CD8-positive, alpha-beta T cell (primary cell): ENCODE measurements at regions of chr5 and their contacts with region 1.

Region 1: DNA sequence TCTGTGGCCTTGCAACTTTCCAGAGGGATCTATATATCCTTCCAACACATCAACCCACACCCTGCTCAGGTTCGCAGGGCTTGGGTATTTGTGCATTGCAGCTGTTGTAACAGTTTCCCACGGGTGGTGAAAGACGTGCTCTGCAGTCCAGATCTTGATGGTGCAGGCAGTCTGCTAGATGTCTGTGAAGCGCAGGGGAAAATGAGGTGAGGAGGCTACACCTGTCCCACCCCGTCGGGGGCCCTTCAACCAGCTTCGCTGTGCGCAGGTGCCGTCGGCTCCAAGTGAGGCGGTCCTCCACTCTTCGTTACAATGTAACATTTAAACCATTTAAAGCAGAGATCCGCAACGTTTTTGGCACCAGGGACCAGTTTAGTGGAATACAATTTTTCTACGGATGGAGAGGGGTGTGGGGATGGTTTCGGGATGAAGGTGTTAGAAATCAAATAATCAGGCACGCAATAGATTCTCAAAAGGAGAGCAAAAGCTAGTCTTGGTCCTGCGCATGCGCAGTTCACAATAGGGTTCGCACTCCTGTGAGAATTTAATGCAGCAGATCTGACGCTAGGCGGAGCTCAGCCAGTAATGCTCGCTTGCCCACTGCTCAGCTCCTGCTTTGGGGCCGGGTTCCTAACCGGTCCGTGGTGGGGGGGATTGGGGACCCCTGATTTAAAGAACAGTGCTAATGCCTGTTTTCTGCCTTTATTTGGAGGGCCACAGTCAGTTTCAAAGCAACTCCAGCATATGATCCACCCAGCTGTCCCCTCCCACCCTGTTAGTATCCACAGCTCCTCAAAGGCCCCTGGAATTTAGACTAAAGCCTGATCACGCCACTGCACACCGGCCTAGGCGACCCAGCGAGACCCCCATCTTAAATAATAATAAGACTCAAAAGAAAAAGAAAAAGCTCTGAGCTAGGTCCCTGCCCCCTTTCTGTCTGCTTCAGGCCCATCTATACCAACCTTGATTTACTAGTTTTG is 97.1 kb upstream of the SELENOP start:
- DNase-seq: peak; percentile 78 to 96 (median 90)
- ATAC-seq: peak; percentile 91
- H3K4me3 ChIP-seq: peak overlapping the region; percentile 65 to 71
- H3K4me3 Mint-ChIP-seq: peak overlapping the region; percentile 93
- H3K27ac ChIP-seq: peak overlapping the region; percentile 57 to 60
- H3K27ac Mint-ChIP-seq: peak overlapping the region; percentile 95
- H3K4me1 ChIP-seq: peaks cover 9% of the 10 kb centered on the region
- H3K4me1 Mint-ChIP-seq: peaks cover 14% of the 10 kb centered on the region
- H3K27me3 ChIP-seq: no peaks in the 10 kb centered on the region
- H3K27me3 Mint-ChIP-seq: peaks cover 2% of the 10 kb centered on the region
- CTCF ChIP-seq: peak; percentile 86

Region 2: GRCh38 chr5:41924872-41925554 is 983.8 kb before region 1 on chr5 and contains the start of gene FBXO4:
- CTCF ChIA-PET with region 1: no interaction called
- POLR2A ChIA-PET with region 1: no interaction called
- intact Hi-C with region 1: no loop called
- DNase-seq: peak; percentile 79 to 96 (median 88)
- ATAC-seq: peak; percentile 96
- H3K4me3 ChIP-seq: peak within 1 kb of the TSS; percentile 79 to 87
- H3K4me3 Mint-ChIP-seq: peak within 1 kb of the TSS; percentile 87
- H3K27ac ChIP-seq: peak within 1 kb of the TSS; percentile 91 to 98
- H3K27ac Mint-ChIP-seq: peak within 1 kb of the TSS; percentile 99
- H3K4me1 ChIP-seq: peaks cover 16% of the 10 kb centered on the region
- H3K4me1 Mint-ChIP-seq: peaks cover 28% of the 10 kb centered on the region
- H3K27me3 ChIP-seq: no peaks in the 10 kb centered on the region
- H3K27me3 Mint-ChIP-seq: no peaks in the 10 kb centered on the region
- CTCF ChIP-seq: peak; percentile 57
- total RNA-seq, gene FBXO4: 4.4 to 4.7 TPM

Region 3: DNA sequence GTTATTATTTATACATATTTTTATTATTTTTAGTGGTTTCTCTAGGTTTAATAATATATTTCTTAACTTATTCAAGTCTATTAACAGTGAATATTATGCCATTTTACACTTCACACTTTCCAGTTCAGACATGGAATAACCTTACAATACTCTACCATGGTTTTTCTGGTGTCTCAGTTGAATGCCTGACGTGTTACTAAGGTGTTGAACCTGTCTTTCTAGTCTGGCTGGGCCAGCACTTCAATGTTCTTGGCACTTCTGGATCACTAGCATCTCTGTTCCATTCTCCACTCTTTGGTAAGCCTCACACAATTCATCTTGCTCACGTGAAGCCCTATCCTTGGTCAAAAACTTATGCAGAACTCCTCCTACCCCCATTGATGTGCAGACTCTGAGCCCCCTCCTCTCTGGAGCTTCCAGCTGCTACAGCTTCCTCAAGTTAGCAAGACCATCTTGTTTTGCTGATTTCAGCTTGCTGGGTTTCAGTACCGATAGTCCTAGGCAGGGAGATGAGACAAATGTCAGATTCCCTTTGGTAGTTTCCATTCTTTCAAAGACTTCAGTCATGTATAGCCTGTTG is 740.6 kb before region 1 on chr5:
- CTCF ChIA-PET with region 1: no interaction called
- POLR2A ChIA-PET with region 1: no interaction called
- intact Hi-C with region 1: no loop called
- DNase-seq: no peak
- ATAC-seq: no peak
- H3K4me3 ChIP-seq: no peak overlapping the region
- H3K4me3 Mint-ChIP-seq: no peak overlapping the region
- H3K27ac ChIP-seq: no peak overlapping the region
- H3K27ac Mint-ChIP-seq: no peak overlapping the region
- H3K4me1 ChIP-seq: no peaks in the 10 kb centered on the region
- H3K4me1 Mint-ChIP-seq: no peaks in the 10 kb centered on the region
- H3K27me3 ChIP-seq: no peaks in the 10 kb centered on the region
- H3K27me3 Mint-ChIP-seq: no peaks in the 10 kb centered on the region
- CTCF ChIP-seq: no peak

Region 4: GRCh38 chr5:42235837-42236236 is 673.0 kb before region 1 on chr5:
- CTCF ChIA-PET with region 1: no interaction called
- POLR2A ChIA-PET with region 1: no interaction called
- intact Hi-C with region 1: no loop called
- DNase-seq: no peak
- ATAC-seq: no peak
- H3K4me3 ChIP-seq: no peak overlapping the region
- H3K4me3 Mint-ChIP-seq: no peak overlapping the region
- H3K27ac ChIP-seq: no peak overlapping the region
- H3K27ac Mint-ChIP-seq: no peak overlapping the region
- H3K4me1 ChIP-seq: no peaks in the 10 kb centered on the region
- H3K4me1 Mint-ChIP-seq: no peaks in the 10 kb centered on the region
- H3K27me3 ChIP-seq: no peaks in the 10 kb centered on the region
- H3K27me3 Mint-ChIP-seq: peaks cover 2% of the 10 kb centered on the region
- CTCF ChIP-seq: no peak

Region 5: GRCh38 chr5:42950440-42951292 is 41.9 kb after region 1 on chr5:
- CTCF ChIA-PET with region 1: interaction called, 58 read pairs
- POLR2A ChIA-PET with region 1: interaction called, 33 read pairs
- intact Hi-C with region 1: loop called (anchors 1 to 2 kb)
- DNase-seq: peak; percentile 26 to 90 (median 72)
- ATAC-seq: peak; percentile 43
- H3K4me3 ChIP-seq: peak overlapping the region; percentile 72 to 83
- H3K4me3 Mint-ChIP-seq: peak overlapping the region; percentile 94
- H3K27ac ChIP-seq: peak overlapping the region; percentile 93 to 94
- H3K27ac Mint-ChIP-seq: peak overlapping the region; percentile 99
- H3K4me1 ChIP-seq: peaks cover 20% of the 10 kb centered on the region
- H3K4me1 Mint-ChIP-seq: peaks cover 34% of the 10 kb centered on the region
- H3K27me3 ChIP-seq: no peaks in the 10 kb centered on the region
- H3K27me3 Mint-ChIP-seq: no peaks in the 10 kb centered on the region
- CTCF ChIP-seq: no peak

Region 6: GRCh38 chr5:43008369-43009153 is 99.8 kb after region 1 on chr5:
- CTCF ChIA-PET with region 1: interaction called, 8 read pairs
- POLR2A ChIA-PET with region 1: interaction called, 26 read pairs
- intact Hi-C with region 1: no loop called
- DNase-seq: peak; percentile 86 to 97 (median 93)
- ATAC-seq: peak; percentile 63
- H3K4me3 ChIP-seq: peak overlapping the region; percentile 70 to 81
- H3K4me3 Mint-ChIP-seq: peak overlapping the region; percentile 98
- H3K27ac ChIP-seq: peak overlapping the region; percentile 94 to 96
- H3K27ac Mint-ChIP-seq: peak overlapping the region; percentile 96
- H3K4me1 ChIP-seq: peaks cover 25% of the 10 kb centered on the region
- H3K4me1 Mint-ChIP-seq: peaks cover 34% of the 10 kb centered on the region
- H3K27me3 ChIP-seq: no peaks in the 10 kb centered on the region
- H3K27me3 Mint-ChIP-seq: no peaks in the 10 kb centered on the region
- CTCF ChIP-seq: no peak

Region 7: DNA sequence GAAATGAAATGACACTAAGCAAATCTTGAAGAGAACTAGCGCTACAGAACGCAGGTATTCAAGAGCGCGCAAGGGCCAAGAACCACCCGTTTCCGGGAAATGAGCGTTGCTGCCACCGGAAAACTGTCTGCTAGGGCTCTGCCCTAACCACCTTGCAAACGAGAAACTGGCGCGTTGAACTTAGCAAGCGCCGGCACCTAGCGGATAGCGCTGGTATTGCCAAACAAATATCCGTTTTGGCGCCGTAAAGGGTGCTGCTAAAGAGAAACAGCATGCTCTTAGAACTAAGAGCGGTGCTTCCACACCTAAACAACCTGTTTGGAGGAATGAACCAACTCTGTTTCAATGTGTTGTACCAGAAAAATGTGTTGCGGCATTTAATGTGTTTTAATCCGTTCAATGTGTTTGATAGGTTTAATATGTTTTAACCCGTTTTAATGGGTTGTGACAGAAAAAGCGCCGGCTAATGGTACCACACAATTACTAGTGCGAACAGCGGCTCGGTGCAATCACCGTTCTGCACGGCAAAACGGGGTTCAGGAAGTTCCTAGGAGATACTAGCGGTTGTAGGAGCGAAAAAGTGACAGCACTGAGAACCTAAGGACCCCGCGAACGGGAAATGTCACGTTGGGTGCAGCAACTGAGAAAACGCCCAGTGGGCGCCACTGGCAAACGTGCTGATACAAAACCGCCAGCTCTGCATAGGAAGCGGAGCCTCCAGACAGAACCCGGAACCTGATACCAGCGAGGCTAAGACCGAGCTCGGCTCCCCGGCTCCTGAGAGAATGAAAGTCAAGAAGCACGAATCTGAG is 131.7 kb after region 1 on chr5 and contains the start of gene ANXA2R:
- CTCF ChIA-PET with region 1: interaction called, 25 read pairs
- POLR2A ChIA-PET with region 1: interaction called, 69 read pairs
- intact Hi-C with region 1: loop called (anchors 1 to 2 kb)
- DNase-seq: peak; percentile 88 to 98 (median 93)
- ATAC-seq: peak; percentile 58
- H3K4me3 ChIP-seq: peak within 1 kb of the TSS; percentile 86 to 87
- H3K4me3 Mint-ChIP-seq: peak within 1 kb of the TSS; percentile 93
- H3K27ac ChIP-seq: peak within 1 kb of the TSS; percentile 93 to 94
- H3K27ac Mint-ChIP-seq: peak within 1 kb of the TSS; percentile 98
- H3K4me1 ChIP-seq: peaks cover 27% of the 10 kb centered on the region
- H3K4me1 Mint-ChIP-seq: peaks cover 56% of the 10 kb centered on the region
- H3K27me3 ChIP-seq: no peaks in the 10 kb centered on the region
- H3K27me3 Mint-ChIP-seq: no peaks in the 10 kb centered on the region
- CTCF ChIP-seq: peak; percentile 79
- total RNA-seq, gene ANXA2R: 38.2 to 39.5 TPM

Region 8: DNA sequence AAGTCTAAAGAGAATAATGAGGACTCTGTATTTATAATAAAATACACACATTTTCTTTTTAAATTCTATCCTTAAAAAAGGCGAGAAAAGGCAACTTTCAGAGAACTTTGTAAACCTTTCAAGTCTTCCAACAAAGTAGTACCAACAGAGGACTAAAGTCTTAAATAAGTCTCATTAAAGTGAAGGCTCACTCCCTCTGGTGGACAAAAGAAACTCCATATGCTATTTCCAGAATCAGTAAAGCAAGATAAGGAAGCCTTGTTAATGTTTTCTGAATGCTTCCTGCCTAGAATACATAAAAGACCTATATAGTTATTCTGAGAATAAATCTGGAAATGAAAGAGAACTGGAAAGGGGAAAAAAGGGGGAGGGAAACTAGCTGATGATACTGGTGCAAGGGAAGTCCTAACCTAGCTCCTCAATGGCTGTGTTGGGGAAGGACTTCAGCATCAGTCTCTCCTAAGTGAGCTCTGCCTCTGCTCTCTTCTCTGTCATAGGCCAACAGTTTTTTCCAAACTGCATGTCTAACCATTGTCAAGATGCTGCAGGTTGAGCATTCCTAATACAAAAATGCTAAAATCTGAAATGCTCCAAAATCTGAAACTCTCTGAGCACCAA is 397.3 kb after region 1 on chr5:
- CTCF ChIA-PET with region 1: interaction called, 5 read pairs
- POLR2A ChIA-PET with region 1: no interaction called
- intact Hi-C with region 1: loop called (anchors 1 to 2 kb)
- DNase-seq: peak in 2 of 9 experiments; percentile 61 to 72
- ATAC-seq: peak; percentile 83
- H3K4me3 ChIP-seq: no peak overlapping the region
- H3K4me3 Mint-ChIP-seq: no peak overlapping the region
- H3K27ac ChIP-seq: peak overlapping the region in 1 of 2 experiments; percentile 12
- H3K27ac Mint-ChIP-seq: peak overlapping the region; percentile 5
- H3K4me1 ChIP-seq: peaks cover 4% of the 10 kb centered on the region
- H3K4me1 Mint-ChIP-seq: peaks cover 51% of the 10 kb centered on the region
- H3K27me3 ChIP-seq: no peaks in the 10 kb centered on the region
- H3K27me3 Mint-ChIP-seq: no peaks in the 10 kb centered on the region
- CTCF ChIP-seq: peak; percentile 75